Activated CD4-positive, alpha-beta T cell treated with anti-CD3 and anti-CD28 coated beads, Interleukin-2, amount 10 ng/mL, durations not matched to agents 24 days and 14 days (primary cell): ENCODE measurements at regions of chr6 and their contacts with region 1.

Region 1: DNA sequence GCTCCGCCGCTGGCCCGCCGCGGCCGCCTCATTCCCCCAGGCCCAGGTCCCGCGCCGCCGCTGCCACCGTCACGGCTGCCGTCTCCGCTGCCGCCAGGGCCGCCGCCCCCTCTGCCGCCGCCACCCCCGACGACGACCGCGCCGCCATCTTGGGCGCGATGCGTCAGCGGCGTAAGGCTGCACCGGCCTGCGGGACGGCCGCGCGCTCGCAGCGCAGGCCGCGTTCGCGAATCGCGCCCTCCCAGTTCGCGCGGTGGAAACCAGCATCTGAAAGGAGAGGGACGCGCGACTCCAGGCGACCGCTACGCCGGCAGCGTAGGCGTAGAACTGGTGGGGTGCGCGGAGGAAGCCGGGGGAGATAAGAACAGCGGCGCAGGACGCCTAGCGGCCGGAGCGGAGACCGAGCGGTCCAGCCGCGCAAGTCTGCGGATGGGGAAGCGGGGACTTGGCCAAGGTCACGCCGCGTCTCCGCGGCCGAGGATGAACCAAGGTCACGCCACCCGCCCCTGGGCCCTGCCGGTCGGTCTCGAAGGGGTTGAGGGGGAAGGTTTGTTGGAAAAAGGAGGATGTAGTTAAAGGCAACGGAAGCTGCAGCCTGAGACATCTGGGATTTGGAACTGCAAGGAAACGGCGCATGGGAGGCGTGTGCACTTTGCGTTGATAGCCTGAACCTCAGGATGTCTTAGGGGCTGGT is at the start of gene NUDT3:
- DNase-seq: peak; percentile 98
- H3K4me3 Mint-ChIP-seq: no peak within 1 kb of the TSS
- H3K27ac Mint-ChIP-seq: no peak within 1 kb of the TSS
- H3K4me1 Mint-ChIP-seq: peaks cover 9% of the 10 kb centered on the region
- H3K27me3 Mint-ChIP-seq: no peaks in the 10 kb centered on the region
- total RNA-seq, gene NUDT3: 21.2 and 21.8 TPM in 2 replicates

Region 2: GRCh38 chr6:34161857-34162515 is 230.7 kb before region 1 on chr6:
- intact Hi-C with region 1: loop called (anchors 5 kb)
- DNase-seq: no peak
- H3K4me3 Mint-ChIP-seq: no peak overlapping the region
- H3K27ac Mint-ChIP-seq: no peak overlapping the region
- H3K4me1 Mint-ChIP-seq: peaks cover 3% of the 10 kb centered on the region
- H3K27me3 Mint-ChIP-seq: peaks cover 29% of the 10 kb centered on the region

Region 3: GRCh38 chr6:34196126-34196830 is 196.4 kb before region 1 on chr6:
- intact Hi-C with region 1: loop called (anchors 1 kb)
- DNase-seq: peak; percentile 97
- H3K4me3 Mint-ChIP-seq: peak overlapping the region; percentile 80
- H3K27ac Mint-ChIP-seq: peak overlapping the region; percentile 48
- H3K4me1 Mint-ChIP-seq: peaks cover 9% of the 10 kb centered on the region
- H3K27me3 Mint-ChIP-seq: peaks cover 14% of the 10 kb centered on the region

Region 4: DNA sequence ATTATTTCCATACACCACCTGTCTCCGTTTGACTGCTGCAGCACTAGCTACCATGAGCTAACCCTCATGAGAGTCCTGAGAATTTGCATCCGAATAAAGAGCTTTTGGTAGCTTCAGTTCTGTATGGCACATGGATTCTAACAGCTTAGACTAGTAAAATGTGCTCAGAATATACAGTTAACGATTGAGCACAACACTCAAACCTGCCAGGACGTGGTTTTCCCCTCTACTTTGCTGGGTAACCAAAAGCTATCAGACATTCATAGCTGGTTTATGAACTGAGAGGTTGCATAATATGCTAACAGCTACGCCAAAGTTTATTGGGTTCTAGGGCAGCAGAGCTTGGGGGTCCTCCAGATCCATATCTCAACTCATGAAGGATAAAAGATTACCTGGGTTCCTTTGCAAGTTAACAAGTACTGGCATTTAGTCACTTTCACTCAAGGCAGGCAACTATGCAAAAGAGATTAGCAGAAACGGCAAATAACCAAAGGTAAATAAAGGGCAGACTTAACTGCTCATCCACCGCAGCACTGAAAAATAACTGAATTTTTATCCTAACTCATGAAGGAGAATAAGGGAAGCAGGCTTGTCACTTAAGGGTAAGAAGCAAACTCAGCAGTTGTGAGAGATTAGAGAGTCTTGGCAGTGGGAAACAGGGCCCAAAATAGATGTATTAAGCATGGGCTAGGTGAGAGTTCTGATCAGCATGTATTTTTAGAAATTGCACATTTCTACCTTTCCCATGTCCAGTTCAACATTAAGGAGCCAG is 29.5 kb before region 1 on chr6:
- intact Hi-C with region 1: no loop called
- DNase-seq: peak; percentile 74
- H3K4me3 Mint-ChIP-seq: no peak overlapping the region
- H3K27ac Mint-ChIP-seq: no peak overlapping the region
- H3K4me1 Mint-ChIP-seq: peaks cover 32% of the 10 kb centered on the region
- H3K27me3 Mint-ChIP-seq: no peaks in the 10 kb centered on the region

Region 5: DNA sequence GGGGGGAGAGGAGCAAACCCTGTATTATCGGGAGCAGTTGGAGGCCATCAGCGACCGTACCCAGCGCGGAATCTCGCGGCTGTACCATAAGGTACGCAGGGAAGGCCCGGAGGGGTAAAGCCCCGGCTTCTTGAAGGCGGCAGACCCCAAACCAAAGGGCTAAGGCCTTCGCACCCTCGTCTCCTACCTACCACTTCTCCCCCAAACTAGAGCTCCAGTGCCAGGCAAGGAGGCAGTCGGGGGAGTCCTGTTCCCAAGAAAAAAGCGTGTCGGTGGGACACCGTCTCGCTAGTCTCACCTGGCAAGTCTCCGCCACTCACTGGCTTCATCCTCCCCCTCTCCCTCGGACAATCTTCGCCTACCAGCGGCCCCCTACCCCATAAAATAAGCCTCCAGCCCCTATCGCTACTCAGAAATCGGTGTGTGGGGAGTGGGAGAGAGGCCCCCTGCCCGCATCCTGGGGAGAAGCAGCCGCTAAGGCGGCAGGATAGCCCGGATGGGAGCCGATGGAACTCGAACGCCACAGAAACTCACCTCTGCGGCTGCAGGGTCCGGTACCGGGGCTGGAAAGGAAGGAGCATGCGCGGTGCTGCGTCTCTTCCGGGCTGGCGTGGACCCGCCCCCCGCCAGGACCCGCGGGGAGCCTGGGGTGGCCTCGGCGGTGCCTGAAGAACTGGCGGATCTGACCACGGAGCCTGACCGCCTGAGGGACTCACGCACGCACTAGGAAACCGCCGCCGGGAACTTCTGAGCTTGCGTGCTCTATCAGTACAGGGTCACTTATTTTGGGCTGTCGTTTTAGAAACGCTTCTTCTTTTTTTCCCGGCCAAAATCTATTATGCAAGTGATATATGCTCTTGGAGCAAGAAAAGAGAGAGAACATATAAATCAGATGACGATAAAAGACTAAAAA is 33.1 kb after region 1 on chr6 and contains the start of gene RPS10:
- intact Hi-C with region 1: loop called (anchors 1 kb)
- DNase-seq: peak; percentile 98
- H3K4me3 Mint-ChIP-seq: peak within 1 kb of the TSS; percentile 99
- H3K27ac Mint-ChIP-seq: peak within 1 kb of the TSS; percentile 99
- H3K4me1 Mint-ChIP-seq: peaks cover 17% of the 10 kb centered on the region
- H3K27me3 Mint-ChIP-seq: peaks cover 5% of the 10 kb centered on the region
- total RNA-seq, gene RPS10: 1,681 and 1,689 TPM in 2 replicates

Region 6: DNA sequence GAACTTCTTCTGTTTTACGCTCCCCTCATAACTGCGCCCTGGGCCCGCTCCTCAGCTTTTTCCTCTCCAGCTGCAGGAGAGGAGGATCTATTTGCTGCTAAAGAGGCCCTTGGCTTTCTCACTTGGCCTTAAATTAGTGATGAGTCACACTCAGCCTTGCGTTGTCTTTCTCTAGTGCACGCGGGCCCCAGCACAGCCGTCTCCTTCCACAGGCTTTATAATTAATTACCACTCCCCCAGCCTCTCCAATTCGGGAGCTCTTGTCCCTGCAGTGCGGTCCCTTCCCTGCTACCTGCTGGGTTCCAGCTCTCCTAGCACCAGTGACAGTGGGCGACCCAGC is 98.4 kb after region 1 on chr6:
- intact Hi-C with region 1: no loop called
- DNase-seq: no peak
- H3K4me3 Mint-ChIP-seq: no peak overlapping the region
- H3K27ac Mint-ChIP-seq: no peak overlapping the region
- H3K4me1 Mint-ChIP-seq: peaks cover 6% of the 10 kb centered on the region
- H3K27me3 Mint-ChIP-seq: no peaks in the 10 kb centered on the region